ENCODE measurements at regions of chr9 and their contacts with region 1.

Region 1: GRCh38 chr9:72038890-72039410 is 21.5 kb downstream of the C9orf57 start:
- DNase-seq: peak; percentile 72
- ATAC-seq: peak; percentile 76
- H3K4me3 Mint-ChIP-seq: no peak overlapping the region
- H3K27ac Mint-ChIP-seq: no peak overlapping the region
- H3K4me1 Mint-ChIP-seq: peaks cover 2% of the 10 kb centered on the region
- H3K27me3 Mint-ChIP-seq: peaks cover 12% of the 10 kb centered on the region

Region 2: DNA sequence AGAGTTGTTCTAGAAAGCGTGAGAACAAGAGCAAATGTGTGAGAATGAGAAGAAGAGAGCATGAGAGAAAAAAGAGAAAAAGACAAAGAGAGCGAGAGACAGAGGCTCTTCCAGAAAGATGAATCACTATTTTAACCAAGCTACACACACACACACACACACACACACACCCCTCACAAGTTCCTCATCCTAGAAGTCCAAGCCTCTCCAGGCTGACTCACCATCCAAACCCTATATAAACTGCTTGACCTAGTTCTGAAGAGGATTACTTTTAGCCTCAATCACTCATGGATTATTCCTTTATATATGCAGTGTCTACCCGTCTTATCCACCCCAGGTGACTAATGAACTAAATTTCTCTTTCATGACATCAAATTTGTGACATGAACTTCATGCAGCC is 16.1 kb before region 1 on chr9:
- CTCF ChIA-PET with region 1: interaction called, 45 read pairs
- POLR2A ChIA-PET with region 1: no interaction called
- DNase-seq: no peak
- ATAC-seq: no peak
- H3K4me3 Mint-ChIP-seq: no peak overlapping the region
- H3K27ac Mint-ChIP-seq: no peak overlapping the region
- H3K4me1 Mint-ChIP-seq: peaks cover 7% of the 10 kb centered on the region
- H3K27me3 Mint-ChIP-seq: no peaks in the 10 kb centered on the region

Region 3: GRCh38 chr9:72271613-72272478 is 232.9 kb after region 1 on chr9:
- CTCF ChIA-PET with region 1: interaction called, 95 read pairs
- POLR2A ChIA-PET with region 1: no interaction called
- DNase-seq: peak; percentile 68
- ATAC-seq: peak; percentile 65
- H3K4me3 Mint-ChIP-seq: no peak overlapping the region
- H3K27ac Mint-ChIP-seq: no peak overlapping the region
- H3K4me1 Mint-ChIP-seq: no peaks in the 10 kb centered on the region
- H3K27me3 Mint-ChIP-seq: peaks cover 5% of the 10 kb centered on the region

Region 4: DNA sequence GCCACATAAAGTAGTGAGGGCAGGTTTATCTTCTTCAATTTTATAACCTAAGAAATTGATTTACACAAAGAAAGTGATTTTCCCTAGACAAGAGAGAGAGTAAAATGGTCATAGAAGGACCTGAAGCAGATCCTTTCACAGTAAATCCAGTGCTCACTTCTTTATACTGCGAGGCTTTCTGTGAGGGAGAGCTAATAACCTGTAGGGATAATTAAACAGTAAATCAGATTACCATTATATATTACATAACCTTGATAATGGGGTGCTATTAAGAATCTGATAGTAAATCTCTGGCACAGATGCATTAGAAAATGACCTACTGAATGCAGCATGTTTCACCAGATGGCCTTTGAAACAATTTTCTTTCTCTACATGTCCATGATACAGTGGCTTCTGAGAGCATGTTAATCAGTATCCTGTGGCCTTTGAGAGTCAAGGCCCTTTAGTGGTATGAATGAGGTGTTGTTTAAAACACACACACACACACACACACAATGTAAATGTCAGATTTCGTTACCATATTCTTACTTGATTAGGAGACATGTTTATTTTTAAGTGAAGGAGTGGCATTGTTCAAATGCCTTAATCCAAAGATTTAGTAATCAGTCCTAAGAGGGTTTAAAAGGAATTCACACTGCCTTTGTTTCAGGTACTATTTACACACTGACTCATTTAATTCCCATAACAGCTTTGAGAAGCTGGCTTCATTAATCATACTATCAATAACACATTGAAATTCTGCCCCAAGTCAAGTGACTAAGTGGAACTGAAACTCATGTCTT is 789.2 kb after region 1 on chr9:
- CTCF ChIA-PET with region 1: interaction called, 10 read pairs
- POLR2A ChIA-PET with region 1: no interaction called
- DNase-seq: no peak
- ATAC-seq: no peak
- H3K4me3 Mint-ChIP-seq: no peak overlapping the region
- H3K27ac Mint-ChIP-seq: no peak overlapping the region
- H3K4me1 Mint-ChIP-seq: no peaks in the 10 kb centered on the region
- H3K27me3 Mint-ChIP-seq: no peaks in the 10 kb centered on the region

Measured in activated CD8-positive, alpha-beta T cell treated with anti-CD3 and anti-CD28 coated beads, Interleukin-2, amount 10 ng/mL, durations not matched to agents 7 days and 5 days (primary cell).